ENCODE measurements at regions of chr16 and their contacts with region 1.

Region 1: GRCh38 chr16:4350787-4351659 is at the start of gene PAM16:
- DNase-seq: peak; percentile 99
- H3K4me3 Mint-ChIP-seq: peak within 1 kb of the TSS; percentile 97
- H3K27ac Mint-ChIP-seq: peak within 1 kb of the TSS; percentile 93
- H3K4me1 Mint-ChIP-seq: peaks cover 13% of the 10 kb centered on the region
- H3K27me3 Mint-ChIP-seq: no peaks in the 10 kb centered on the region
- total RNA-seq, gene PAM16: 91.5 and 106 TPM in 2 replicates

Region 2: DNA sequence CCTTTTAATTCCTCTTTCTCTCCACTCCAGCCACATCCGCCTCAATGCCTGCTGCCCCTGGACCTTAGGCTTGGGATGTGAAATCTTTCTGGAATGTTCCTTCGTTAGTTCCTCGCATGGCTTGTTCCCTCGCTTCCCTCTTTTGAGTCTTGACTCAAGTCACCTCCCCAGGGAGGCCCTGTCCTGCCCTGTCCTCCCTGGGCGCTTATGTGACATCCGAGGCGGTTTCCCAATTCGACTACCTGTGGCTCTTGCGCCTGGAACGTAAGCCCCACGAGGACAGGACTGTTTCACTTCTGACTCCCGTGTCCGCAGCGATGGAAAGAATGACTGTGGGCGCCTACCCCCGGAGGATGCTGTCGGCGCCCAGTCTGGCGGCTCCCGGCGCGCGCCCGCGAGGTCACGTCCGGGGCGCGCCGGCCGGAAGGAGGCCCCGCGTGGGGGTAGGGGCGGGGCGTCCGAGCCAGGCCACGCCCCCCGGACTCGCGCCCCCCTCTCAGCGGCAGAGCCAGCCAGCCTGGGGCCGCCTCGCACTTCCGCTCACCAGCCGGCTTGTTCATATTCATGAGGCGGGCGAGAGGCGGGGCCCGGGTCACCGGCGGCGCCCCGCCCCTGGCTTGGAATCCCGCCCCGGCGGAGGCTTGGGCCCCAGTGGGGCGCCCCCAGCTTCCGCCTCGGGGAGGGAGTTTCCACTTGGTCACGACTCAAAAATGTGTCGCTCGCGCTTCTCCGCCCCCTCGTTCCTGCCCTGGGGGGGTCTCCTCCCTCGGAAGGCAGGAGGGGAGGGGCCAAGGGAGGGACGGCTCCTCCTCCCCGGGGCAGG is 43.6 kb before region 1 on chr16:
- intact Hi-C with region 1: loop called (anchors 2 kb)
- DNase-seq: peak; percentile 97
- H3K4me3 Mint-ChIP-seq: peak overlapping the region; percentile 96
- H3K27ac Mint-ChIP-seq: peak overlapping the region; percentile 96
- H3K4me1 Mint-ChIP-seq: peaks cover 22% of the 10 kb centered on the region
- H3K27me3 Mint-ChIP-seq: peaks cover 6% of the 10 kb centered on the region

Region 3: DNA sequence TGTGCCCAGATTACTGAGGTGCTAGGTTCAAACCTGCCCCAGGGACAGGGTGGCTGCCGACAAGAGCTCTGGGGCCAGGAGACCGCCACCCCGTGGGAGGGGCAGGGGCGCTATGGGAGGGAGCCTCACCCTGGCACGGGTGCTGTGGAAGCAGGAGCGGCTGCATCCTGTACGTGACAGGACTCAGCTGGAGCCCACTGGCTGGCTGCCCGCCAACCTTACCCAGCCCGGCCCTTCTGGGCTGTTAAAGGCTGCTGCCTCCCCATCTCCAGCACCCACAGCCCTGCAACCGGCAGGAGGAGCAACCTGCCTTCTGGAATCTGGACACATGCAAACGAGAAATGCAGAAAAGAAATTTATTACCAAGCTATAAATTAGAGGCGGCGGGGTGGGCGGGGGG is 11.1 kb before region 1 on chr16:
- intact Hi-C with region 1: no loop called
- DNase-seq: no peak
- H3K4me3 Mint-ChIP-seq: no peak overlapping the region
- H3K27ac Mint-ChIP-seq: no peak overlapping the region
- H3K4me1 Mint-ChIP-seq: no peaks in the 10 kb centered on the region
- H3K27me3 Mint-ChIP-seq: no peaks in the 10 kb centered on the region

Region 4: DNA sequence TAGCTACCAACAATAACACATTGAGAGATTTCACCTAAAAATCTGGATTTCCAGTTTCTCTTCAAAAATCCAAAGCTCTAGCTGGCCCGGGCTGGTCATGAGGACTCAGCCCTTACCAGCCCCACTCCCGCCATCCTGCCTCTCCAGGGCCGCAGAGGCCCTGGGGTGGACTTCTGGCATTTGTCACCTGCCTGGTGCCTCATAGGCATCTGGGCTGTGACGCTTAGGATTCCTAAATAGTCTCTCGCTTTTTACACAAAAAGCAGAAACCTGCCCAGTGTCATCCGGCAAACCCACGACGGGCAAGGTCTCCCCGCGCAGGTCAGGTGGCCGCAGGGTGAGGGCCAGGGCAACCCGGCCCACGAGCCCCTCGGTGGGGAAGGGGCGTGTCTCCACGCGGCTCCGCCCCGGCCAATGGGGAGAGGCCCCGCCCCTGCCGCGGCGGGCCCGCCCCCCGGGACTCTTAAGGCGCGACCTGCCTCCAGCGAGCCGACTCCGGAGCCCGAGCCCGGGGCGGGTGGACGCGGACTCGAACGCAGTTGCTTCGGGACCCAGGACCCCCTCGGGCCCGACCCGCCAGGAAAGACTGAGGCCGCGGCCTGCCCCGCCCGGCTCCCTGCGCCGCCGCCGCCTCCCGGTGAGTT is 20.5 kb after region 1 on chr16 and contains the start of gene VASN:
- intact Hi-C with region 1: loop called (anchors 1 kb)
- DNase-seq: peak; percentile 59
- H3K4me3 Mint-ChIP-seq: peak within 1 kb of the TSS; percentile 66
- H3K27ac Mint-ChIP-seq: no peak within 1 kb of the TSS
- H3K4me1 Mint-ChIP-seq: no peaks in the 10 kb centered on the region
- H3K27me3 Mint-ChIP-seq: no peaks in the 10 kb centered on the region
- total RNA-seq, gene VASN: 0.18 TPM in 1 of 2 replicates, not detected in the other

Region 5: GRCh38 chr16:4416200-4417032 is 65.4 kb after region 1 on chr16 and contains the start of gene CORO7:
- intact Hi-C with region 1: loop called (anchors 1 kb)
- DNase-seq: peak; percentile 99
- H3K4me3 Mint-ChIP-seq: peak within 1 kb of the TSS; percentile 90
- H3K27ac Mint-ChIP-seq: peak within 1 kb of the TSS; percentile 92
- H3K4me1 Mint-ChIP-seq: peaks cover 16% of the 10 kb centered on the region
- H3K27me3 Mint-ChIP-seq: peaks cover 7% of the 10 kb centered on the region
- total RNA-seq, gene CORO7: 87.9 and 90.8 TPM in 2 replicates

Region 6: DNA sequence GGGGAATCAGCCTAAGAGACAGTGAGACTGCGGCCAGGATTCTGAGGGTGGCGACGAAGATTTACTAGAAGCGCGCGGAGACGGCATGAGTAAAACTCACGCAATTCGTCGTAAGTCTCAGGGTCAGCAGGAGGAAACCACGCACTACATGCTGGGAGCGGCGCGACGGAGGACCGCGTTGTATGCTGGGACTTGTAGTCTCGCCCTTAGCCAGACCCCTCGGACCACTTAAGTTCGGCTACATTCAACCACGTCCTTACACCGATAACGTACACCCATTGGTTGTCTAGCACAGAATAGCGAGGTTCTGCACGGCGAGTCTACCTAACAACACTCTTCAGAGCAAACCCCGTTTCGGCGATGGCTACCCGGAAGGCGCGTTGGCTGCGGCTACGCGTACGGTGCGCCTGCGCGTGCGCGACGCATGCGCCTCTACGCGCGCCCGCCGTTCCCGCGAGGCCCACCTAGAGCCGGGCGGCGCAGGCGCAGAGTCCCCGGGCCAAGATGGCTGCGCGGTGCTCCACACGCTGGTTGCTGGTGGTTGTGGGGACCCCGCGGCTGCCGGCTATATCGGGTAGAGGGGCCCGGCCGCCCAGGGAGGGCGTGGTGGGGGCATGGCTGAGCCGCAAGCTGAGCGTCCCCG is 74.5 kb after region 1 on chr16 and contains the start of gene DNAJA3:
- intact Hi-C with region 1: loop called (anchors 1 kb)
- DNase-seq: peak; percentile 91
- H3K4me3 Mint-ChIP-seq: peak within 1 kb of the TSS; percentile 98
- H3K27ac Mint-ChIP-seq: peak within 1 kb of the TSS; percentile 100
- H3K4me1 Mint-ChIP-seq: peaks cover 31% of the 10 kb centered on the region
- H3K27me3 Mint-ChIP-seq: peaks cover 3% of the 10 kb centered on the region
- total RNA-seq, gene DNAJA3: 103 and 107 TPM in 2 replicates